Tibial artery (tissue), 4 donors: ENCODE measurements at regions of chr15 and their contacts with region 1.

Region 1: DNA sequence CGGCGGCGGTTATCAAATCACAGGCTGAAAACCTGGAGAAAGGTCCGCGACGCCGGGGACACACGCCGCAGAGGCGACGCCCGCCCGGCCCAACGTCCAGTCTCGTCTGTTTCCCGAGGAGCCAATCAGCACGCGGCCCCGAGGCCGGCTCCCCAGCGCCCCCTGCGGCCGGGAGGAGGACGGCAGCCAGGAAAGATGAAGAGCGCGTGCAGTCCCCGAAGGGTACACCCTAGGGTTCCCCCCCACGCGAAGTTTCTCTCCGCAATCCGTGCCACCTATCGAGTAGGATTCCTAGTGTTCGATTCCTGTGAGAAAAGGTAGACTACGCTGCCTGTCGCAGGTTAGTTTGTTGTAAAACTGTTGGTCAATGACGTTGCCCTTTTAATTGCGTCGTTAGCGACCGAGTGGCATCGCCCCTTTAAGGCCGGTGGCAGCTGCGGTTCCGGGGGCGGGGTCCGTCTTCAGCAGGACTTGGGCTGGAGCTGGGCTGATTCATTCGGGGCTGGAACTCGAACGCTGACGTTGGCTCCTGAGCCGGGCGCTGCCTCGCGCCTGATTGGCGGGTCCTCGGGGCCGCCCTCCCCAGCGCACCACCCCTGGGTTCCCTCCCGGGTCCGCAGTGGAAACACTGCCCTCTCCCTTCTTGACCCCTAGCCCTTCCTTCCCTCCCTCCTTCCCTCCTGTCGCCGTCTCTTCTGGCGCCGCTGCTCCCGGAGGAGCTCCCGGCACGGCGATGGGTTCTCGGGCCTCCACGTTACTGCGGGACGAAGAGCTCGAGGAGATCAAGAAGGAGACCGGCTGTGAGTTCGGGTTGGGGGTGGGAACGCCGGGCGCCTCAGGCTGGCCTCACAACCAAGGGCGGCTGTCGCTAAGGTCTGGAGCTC is at the starts of genes CHP1 and EXD1:
- DNase-seq: peak; percentile 97 to 99
- H3K4me3 ChIP-seq: peak within 1 kb of the TSS; percentile 74 to 81
- H3K27ac ChIP-seq: peak within 1 kb of the TSS; percentile 85 to 92
- H3K4me1 ChIP-seq: peaks cover 0 to 23% (median 8%) of the 10 kb centered on the region in 4 donors
- H3K27me3 ChIP-seq: no peaks in the 10 kb centered on the region
- CTCF ChIP-seq: peak; percentile 92 to 95

Region 2: DNA sequence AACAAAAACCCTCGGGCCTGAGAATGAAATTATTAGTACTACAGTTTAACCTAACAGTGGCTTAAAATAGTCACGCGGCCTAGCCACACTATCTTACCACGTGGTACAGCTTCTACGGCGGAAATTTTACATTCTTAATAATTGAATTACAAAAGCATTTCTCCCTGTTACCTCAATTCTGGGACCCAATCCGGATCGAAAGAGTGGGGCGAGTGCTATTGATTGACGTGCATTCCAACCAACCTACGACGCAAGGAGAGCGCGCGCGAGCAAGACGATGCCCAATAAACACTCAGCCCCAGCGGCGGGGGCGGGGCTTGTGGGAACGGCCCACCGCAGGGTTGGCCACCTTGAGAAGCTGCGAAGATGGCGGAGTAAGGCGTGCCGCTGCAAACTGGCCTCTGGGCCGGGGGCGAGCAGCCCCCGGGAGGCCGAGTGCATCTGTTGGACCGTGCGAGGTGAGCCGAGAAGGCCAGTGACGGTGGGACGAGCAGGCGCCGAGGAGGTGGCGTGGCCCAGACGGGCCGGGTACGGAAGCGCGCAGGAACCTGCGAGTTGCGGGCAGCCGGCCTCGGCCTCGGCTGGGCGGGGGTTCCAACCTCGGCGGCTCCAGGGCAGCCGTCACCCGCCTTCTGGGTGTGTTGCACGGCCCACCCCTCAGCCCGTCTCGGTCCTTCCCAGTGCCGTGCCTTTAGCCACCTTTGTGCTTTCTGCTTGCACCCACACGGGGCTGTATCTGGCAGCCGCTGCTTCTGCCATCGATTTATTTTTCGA is 52.9 kb after region 1 on chr15:
- intact Hi-C with region 1: loop called (anchors 2 kb)
- DNase-seq: peak; percentile 97 to 99
- H3K4me3 ChIP-seq: peak overlapping the region; percentile 79 to 88
- H3K27ac ChIP-seq: peak overlapping the region; percentile 82 to 91
- H3K4me1 ChIP-seq: peaks cover 3 to 32% (median 14%) of the 10 kb centered on the region in 4 donors
- H3K27me3 ChIP-seq: no peaks in the 10 kb centered on the region
- CTCF ChIP-seq: no peak

Region 3: GRCh38 chr15:41387646-41388045 is 156.8 kb after region 1 on chr15:
- intact Hi-C with region 1: no loop called
- DNase-seq: no peak
- H3K4me3 ChIP-seq: no peak overlapping the region
- H3K27ac ChIP-seq: no peak overlapping the region
- H3K4me1 ChIP-seq: no peaks in the 10 kb centered on the region
- H3K27me3 ChIP-seq: no peaks in the 10 kb centered on the region
- CTCF ChIP-seq: no peak

Region 4: DNA sequence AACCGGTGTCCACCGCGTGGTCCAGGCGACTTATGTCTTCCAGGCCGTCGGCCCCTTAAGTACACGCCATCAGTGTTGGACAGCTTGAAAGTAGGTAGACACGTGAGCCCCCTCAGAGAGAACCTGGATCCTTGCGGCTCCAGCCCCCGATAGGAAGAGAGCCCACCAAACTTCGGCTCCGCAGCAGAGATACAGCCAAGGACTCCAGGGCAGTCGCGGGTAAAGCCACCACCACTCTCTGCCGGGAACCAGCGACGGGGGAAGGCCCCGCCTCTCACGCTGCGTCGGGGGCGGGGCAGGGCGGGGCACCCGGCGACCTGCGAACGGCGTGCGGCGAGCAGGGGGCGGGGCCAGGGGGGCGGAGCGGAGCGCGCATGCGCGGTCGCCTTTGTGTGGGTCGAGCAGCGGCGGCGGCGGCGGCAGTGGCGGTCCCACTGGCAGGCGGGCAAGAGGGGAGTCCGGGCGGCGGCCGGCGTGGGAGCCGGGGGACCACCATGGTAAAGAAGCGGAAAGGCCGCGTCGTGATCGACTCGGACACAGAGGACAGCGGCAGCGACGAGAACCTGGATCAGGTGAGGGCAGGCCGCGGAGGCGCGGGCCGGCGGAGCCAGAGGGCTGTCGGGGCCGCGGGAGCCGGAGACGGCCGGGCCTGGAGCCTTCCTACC is 186.0 kb after region 1 on chr15 and contains the start of gene RTF1:
- intact Hi-C with region 1: loop called (anchors 5 kb)
- DNase-seq: peak; percentile 91 to 97
- H3K4me3 ChIP-seq: peak within 1 kb of the TSS; percentile 93 to 95
- H3K27ac ChIP-seq: peak within 1 kb of the TSS; percentile 87 to 88
- H3K4me1 ChIP-seq: peaks cover 0 to 42% (median 27%) of the 10 kb centered on the region in 4 donors
- H3K27me3 ChIP-seq: no peaks in the 10 kb centered on the region
- CTCF ChIP-seq: no peak